Activated CD4-positive, alpha-beta T cell treated with anti-CD3 and anti-CD28 coated beads for 36 hours (primary cell): ENCODE measurements at regions of chr7 and their contacts with region 1.

Region 1: DNA sequence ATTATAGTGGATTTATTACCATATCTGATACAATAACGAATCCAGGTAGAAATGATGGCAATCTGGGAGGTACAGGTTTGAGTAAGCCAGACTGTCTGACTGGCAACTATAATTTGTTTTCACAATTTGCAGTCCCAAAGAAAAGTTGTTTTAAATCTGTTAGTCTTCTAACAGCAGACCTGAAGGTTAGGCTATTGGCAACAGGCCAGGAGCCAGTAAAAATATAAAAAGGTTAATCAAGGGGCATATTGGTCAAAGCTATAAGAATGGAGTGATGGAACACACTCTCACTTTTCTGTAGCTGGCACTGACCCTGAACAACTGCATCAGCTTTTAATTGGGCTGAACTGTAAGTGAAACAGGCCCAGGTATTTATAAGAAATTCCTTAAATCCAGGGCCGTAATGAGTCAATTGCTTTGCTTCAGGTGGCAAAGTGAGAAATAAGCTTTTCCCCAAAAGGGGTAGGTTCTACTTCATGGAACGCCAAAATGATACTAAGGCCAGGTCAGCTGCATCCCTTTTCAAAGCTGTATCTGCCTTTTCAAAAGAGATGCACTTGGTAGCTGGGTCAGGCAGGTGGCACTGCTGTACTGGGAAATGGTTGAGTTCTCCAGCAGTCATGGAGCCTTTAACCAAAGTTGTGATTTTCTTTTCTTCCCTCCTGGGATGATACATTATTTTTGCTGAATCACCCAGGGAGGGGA is 7.0 kb upstream of the GPR22 start:
- DNase-seq: peak; percentile 65
- ATAC-seq: peak; percentile 88
- H3K4me3 Mint-ChIP-seq: no peak overlapping the region
- H3K27ac Mint-ChIP-seq: no peak overlapping the region
- H3K4me1 Mint-ChIP-seq: no peaks in the 10 kb centered on the region
- H3K27me3 Mint-ChIP-seq: no peaks in the 10 kb centered on the region

Region 2: DNA sequence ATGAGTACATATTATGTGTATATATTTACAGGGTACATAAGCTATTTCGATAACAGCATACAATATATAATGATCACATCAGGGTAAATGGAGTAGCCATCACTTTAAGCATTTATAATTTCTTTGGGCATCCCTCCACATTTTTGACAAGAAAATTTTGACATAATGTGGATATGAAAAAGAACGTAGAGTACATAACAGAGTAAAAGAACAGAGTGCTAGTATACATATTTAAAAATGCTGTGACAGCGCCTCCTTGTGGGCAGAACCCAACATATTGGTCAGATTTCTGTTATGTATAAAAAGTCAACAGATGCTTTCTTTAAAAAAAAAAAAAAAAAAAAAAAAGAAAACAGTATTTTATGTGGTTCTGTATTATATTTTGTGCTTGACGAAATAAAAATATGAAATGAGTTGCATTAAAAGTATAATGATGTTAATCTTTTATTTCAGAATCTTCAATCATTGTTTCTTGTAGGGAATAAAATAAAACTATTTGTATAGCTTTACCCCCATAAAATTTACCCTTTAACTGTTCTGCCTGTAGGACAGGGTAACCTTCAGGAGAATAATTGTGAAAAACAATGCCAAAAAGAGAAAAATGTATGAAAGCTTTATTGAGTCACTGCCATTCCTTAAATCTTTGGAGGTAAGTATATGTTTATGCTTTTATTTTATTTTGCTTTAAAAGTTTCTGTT is 312.4 kb before region 1 on chr7:
- CTCF ChIA-PET with region 1: no interaction called
- POLR2A ChIA-PET with region 1: no interaction called
- intact Hi-C with region 1: no loop called
- DNase-seq: peak; percentile 86
- ATAC-seq: peak; percentile 83
- H3K4me3 Mint-ChIP-seq: no peak overlapping the region
- H3K27ac Mint-ChIP-seq: no peak overlapping the region
- H3K4me1 Mint-ChIP-seq: peaks cover 4% of the 10 kb centered on the region
- H3K27me3 Mint-ChIP-seq: no peaks in the 10 kb centered on the region

Region 3: GRCh38 chr7:107479321-107479720 is 16.4 kb after region 1 on chr7:
- CTCF ChIA-PET with region 1: interaction called, 11 read pairs
- POLR2A ChIA-PET with region 1: no interaction called
- intact Hi-C with region 1: no loop called
- DNase-seq: no peak
- ATAC-seq: no peak
- H3K4me3 Mint-ChIP-seq: no peak overlapping the region
- H3K27ac Mint-ChIP-seq: no peak overlapping the region
- H3K4me1 Mint-ChIP-seq: peaks cover 5% of the 10 kb centered on the region
- H3K27me3 Mint-ChIP-seq: no peaks in the 10 kb centered on the region